PC-3 (cell line): ENCODE measurements at regions of chr12 and their contacts with region 1.

Region 1: GRCh38 chr12:27343255-27344000 is 10.8 kb downstream of the BMAL2 start:
- DNase-seq: peak; percentile 99
- ATAC-seq: peak; percentile 86
- H3K4me3 ChIP-seq: peak overlapping the region; percentile 53
- H3K27ac ChIP-seq: peak overlapping the region; percentile 93
- H3K4me1 ChIP-seq: peaks cover 81% of the 10 kb centered on the region
- H3K27me3 ChIP-seq: no peaks in the 10 kb centered on the region
- CTCF ChIP-seq: no peak

Region 2: GRCh38 chr12:27284751-27285150 is 58.7 kb before region 1 on chr12:
- CTCF ChIA-PET with region 1: no interaction called
- POLR2A ChIA-PET with region 1: no interaction called
- intact Hi-C with region 1: no loop called
- DNase-seq: peak; percentile 57
- ATAC-seq: peak; percentile 74
- H3K4me3 ChIP-seq: no peak overlapping the region
- H3K27ac ChIP-seq: peak overlapping the region; percentile 9
- H3K4me1 ChIP-seq: peaks cover 17% of the 10 kb centered on the region
- H3K27me3 ChIP-seq: no peaks in the 10 kb centered on the region
- CTCF ChIP-seq: no peak

Region 3: DNA sequence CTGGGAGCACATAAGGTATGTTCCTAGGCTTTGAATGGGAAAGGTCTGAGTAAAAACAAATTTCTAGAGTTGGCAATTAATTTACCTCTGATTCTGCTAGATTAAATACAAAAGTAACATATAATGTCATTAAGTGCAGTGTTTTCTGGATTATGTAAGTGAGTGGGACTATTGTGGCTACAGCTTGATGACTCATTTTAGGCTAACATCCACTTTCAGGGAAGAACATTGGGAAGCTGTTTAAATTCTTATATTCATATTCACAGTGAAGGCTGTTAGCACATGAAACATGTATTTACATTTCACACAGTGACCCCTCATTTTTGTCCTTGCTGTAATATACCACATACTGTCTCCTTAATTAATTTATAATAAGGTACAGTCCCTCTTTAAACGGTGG is 24.0 kb before region 1 on chr12:
- CTCF ChIA-PET with region 1: no interaction called
- POLR2A ChIA-PET with region 1: no interaction called
- intact Hi-C with region 1: loop called (anchors 1 kb)
- DNase-seq: peak; percentile 81
- ATAC-seq: peak; percentile 58
- H3K4me3 ChIP-seq: no peak overlapping the region
- H3K27ac ChIP-seq: peak overlapping the region; percentile 70
- H3K4me1 ChIP-seq: peaks cover 52% of the 10 kb centered on the region
- H3K27me3 ChIP-seq: no peaks in the 10 kb centered on the region
- CTCF ChIP-seq: no peak

Region 4: DNA sequence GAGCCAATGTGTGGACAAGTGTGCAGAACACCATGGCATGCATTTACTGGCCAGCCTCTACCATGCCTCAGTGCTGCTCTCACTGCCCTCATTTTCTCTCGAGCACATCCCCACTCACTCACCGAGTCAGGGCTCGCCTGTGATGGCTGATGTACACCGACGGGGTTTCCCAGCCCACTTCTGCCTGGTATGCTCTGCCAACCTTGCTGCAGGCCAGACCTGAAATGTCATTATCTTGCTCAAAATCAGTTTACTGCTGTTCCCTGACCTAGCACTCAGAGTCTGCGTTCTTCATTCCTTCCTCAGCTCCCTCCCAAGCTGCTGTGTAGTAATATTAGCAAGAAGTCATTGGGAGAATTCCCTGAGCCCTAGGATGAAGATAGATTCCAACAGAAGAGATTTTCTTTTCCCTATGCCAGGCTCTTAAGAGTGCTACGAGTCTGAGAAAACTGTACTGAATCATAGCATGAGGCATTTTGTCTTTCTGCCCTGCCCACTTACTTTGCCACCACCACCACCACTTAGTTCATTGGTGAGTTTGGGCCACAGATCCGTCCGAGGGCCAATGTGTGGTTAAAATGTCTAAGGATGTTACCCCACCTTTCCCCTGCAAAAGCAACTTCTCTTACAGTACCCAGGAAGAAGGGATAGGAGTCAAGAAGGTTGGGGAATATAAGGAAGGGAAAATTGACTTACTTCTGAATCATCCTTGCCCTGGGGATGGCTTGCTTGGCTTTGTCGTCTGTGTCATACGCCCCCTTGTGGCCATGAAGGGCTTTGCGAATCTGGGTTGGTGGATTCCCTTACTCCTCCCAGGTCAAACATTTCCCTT is 40.2 kb after region 1 on chr12:
- CTCF ChIA-PET with region 1: no interaction called
- POLR2A ChIA-PET with region 1: interaction called, 4 read pairs
- intact Hi-C with region 1: loop called (anchors 1 kb)
- DNase-seq: peak; percentile 98
- ATAC-seq: peak; percentile 86
- H3K4me3 ChIP-seq: no peak overlapping the region
- H3K27ac ChIP-seq: peak overlapping the region; percentile 72
- H3K4me1 ChIP-seq: peaks cover 24% of the 10 kb centered on the region
- H3K27me3 ChIP-seq: no peaks in the 10 kb centered on the region
- CTCF ChIP-seq: peak; percentile 98

Region 5: DNA sequence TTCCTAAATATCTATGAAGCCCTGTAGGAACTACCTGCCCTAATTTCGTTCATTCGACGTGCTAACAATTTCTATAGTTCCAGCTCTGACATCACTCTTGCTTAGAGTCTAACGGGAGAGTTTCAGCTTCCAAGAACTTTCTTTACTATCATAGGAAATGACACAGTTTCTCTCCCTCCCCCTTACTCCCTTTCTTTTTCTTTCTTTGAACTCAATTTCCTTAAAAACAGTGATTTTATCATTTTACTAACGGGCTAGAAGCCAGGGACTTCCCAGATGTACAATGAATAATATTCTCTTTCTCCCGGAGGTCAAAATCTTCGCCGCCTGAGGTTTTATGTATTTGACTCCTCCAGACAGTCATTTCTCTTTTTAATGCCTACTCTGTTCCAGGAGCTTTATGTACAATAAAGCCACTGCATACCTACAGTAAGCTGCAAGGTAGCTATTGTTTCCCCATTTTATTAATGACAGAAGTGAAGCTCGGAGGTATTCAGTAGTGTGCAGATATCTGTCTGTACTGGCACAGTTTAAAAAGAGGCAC is 118.8 kb after region 1 on chr12:
- CTCF ChIA-PET with region 1: no interaction called
- POLR2A ChIA-PET with region 1: no interaction called
- intact Hi-C with region 1: loop called (anchors 5 kb)
- DNase-seq: peak; percentile 73
- ATAC-seq: peak; percentile 68
- H3K4me3 ChIP-seq: peak overlapping the region; percentile 1; the same call in 1 of the 2 replicates
- H3K27ac ChIP-seq: peak overlapping the region; percentile 71
- H3K4me1 ChIP-seq: peaks cover 36% of the 10 kb centered on the region
- H3K27me3 ChIP-seq: no peaks in the 10 kb centered on the region
- CTCF ChIP-seq: no peak